ENCODE measurements at regions of chrX and their contacts with region 1.

Region 1: DNA sequence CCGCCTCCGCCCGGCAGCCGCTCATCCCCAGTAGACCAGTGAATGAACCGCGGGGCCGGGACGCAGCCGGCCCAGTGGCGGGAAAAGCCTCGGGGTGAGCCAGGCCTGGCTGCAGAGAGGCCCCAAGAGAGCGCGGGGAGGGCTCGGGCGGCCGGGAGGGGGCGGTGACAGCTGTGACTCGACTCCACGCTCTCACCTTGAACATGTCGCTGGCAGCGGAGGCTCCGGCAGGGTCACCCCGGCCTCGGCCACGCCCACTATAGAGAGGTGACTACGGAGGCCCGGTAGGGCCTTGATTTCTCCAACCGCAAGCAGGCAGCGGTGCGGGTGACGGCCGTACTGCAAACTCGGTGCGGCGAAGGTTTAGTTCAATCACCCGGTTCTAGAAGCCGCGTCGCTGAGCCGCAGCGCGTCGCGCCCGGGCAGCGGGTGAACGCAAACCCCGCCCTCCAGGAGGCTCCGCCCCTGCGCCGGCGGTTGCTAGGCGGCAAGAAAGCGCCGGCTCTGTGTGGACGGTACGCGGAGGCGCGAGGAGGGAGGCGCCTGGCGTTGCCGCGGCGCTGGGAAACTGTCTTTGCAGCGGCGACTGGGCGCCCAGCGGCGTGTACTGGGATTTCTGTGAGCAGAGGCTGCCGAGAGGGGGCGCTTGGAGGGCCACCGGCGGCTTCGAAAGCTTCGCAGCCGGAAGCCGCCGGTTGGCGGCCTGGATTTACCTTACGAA is at the starts of genes APOO and CXorf58:
- DNase-seq: peak; percentile 83 to 97 (median 94)
- ATAC-seq: peak; percentile 98
- H3K4me3 ChIP-seq: peak within 1 kb of the TSS; percentile 30 to 52
- H3K27ac ChIP-seq: peak within 1 kb of the TSS; percentile 79 to 92
- H3K4me1 ChIP-seq: no peaks in the 10 kb centered on the region
- H3K27me3 ChIP-seq: no peaks in the 10 kb centered on the region
- CTCF ChIP-seq: peak; percentile 60 to 83
- polyA plus RNA-seq, gene APOO: 15.9 to 24.3 (median 19.2) TPM
- polyA plus RNA-seq, gene CXorf58: 0.13 to 0.52 (median 0.25) TPM in 5 of 6 donors, not detected in the other

Region 2: DNA sequence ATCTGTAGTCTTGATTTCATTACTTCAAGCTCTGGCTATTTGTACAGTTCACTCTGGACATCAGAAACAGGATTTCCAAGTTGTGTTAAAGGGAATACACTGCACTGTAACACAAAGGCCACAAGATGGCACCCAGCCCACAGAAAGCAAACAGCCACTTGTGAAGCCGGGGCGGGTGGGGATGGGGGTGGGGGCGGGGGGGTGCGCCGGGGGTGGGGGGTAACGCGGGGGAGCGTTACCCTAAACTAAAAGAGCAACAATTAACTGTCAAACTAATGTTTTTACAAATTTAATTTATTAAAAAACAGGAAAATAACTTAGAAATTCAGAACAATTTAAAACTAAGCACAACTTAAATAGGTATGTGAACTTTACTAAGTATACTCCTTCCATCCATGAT is 213.1 kb before region 1 on chrX:
- intact Hi-C with region 1: loop called in 1 of 2 experiments (anchors 10 kb)
- DNase-seq: peak in 3 of 4 donors; percentile 12 to 59 (median 41)
- ATAC-seq: peak; percentile 89
- H3K4me3 ChIP-seq: no peak overlapping the region
- H3K27ac ChIP-seq: no peak overlapping the region
- H3K4me1 ChIP-seq: no peaks in the 10 kb centered on the region
- H3K27me3 ChIP-seq: no peaks in the 10 kb centered on the region
- CTCF ChIP-seq: peak; percentile 24 to 42

Region 3: GRCh38 chrX:23756157-23756559 is 151.5 kb before region 1 on chrX:
- intact Hi-C with region 1: loop called in 1 of 2 experiments (anchors 10 kb)
- DNase-seq: peak in 3 of 4 donors; percentile 12 to 61 (median 54)
- ATAC-seq: peak; percentile 75
- H3K4me3 ChIP-seq: no peak overlapping the region
- H3K27ac ChIP-seq: no peak overlapping the region
- H3K4me1 ChIP-seq: no peaks in the 10 kb centered on the region
- H3K27me3 ChIP-seq: no peaks in the 10 kb centered on the region
- CTCF ChIP-seq: peak; percentile 54